ENCODE measurements at regions of chr11 and their contacts with region 1.

Region 1: GRCh38 chr11:10792398-10792975 is 16.2 kb downstream of the EIF4G2 start:
- DNase-seq: peak; percentile 52 to 96 (median 83)

Region 2: GRCh38 chr11:11022125-11022730 is 229.7 kb after region 1 on chr11:
- intact Hi-C with region 1: loop called (anchors 5 kb)
- DNase-seq: no peak

Measured in posterior cingulate gyrus (tissue), 11 donors.